ENCODE measurements at regions of chr2 and their contacts with region 1.

Region 1: DNA sequence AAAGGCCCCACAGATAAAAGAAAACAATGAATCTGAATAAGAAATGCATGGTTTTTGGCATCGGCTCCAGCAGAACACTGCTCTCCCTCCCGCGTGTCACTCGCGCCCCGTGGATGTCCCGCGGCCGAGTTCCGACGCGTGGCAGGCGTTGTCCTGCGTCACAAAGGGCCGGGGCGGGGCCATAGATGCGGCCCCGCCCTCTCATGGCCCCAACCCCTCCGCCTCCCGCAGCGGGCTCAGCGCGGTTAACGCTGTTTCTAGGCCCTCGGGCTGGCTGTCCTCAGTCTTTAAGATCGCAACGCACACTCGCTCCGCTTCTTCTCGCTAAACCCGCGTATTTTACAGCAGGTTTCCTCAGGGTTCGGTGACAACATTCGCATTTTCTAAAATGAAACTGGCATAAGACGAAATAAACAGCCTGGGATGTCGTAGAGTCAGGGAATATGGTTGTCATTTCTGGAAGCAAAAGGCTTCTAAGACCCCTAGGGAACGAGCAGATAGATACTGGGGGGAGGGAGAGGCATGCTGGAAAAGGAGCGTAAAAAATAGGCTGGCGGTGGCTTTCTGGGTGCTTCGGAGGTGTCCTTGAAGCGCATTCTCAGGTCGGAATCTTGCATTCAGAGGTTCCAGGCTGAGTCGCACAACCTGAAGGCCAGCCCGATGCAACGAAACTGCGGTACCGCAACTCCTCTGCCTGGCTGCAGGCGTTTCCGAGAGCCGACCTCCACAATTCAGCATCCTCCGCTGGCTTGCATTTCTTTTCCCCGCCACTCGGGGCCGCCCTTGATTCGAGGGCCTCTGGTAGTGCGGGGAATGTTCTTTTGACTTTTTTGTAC is at the start of gene FKBP7:
- DNase-seq: peak; percentile 53 to 92
- H3K4me3 ChIP-seq: peak within 1 kb of the TSS; percentile 77 to 89
- H3K27ac ChIP-seq: peak within 1 kb of the TSS; percentile 78 to 94
- H3K4me1 ChIP-seq: peaks cover 0 to 23% of the 10 kb centered on the region in 2 donors
- H3K27me3 ChIP-seq: no peaks in the 10 kb centered on the region
- CTCF ChIP-seq: peak; percentile 34 to 56 (median 49)
- total RNA-seq, gene FKBP7: 7.7 TPM

Region 2: GRCh38 chr2:178072383-178073301 is 406.0 kb before region 1 on chr2 and contains the start of gene PDE11A:
- intact Hi-C with region 1: loop called (anchors 1 kb)
- DNase-seq: peak; percentile 47 to 92
- H3K4me3 ChIP-seq: peak within 1 kb of the TSS; percentile 32 to 66
- H3K27ac ChIP-seq: peak within 1 kb of the TSS; percentile 9 to 48
- H3K4me1 ChIP-seq: no peaks in the 10 kb centered on the region
- H3K27me3 ChIP-seq: no peaks in the 10 kb centered on the region
- CTCF ChIP-seq: no peak
- total RNA-seq, gene PDE11A: 0.75 TPM

Region 3: GRCh38 chr2:178193823-178194599 is 284.6 kb before region 1 on chr2 and contains the start of gene OSBPL6:
- intact Hi-C with region 1: loop called (anchors 5 kb)
- DNase-seq: peak; percentile 15 to 90
- H3K4me3 ChIP-seq: peak within 1 kb of the TSS; percentile 84 to 96
- H3K27ac ChIP-seq: peak within 1 kb of the TSS; percentile 88 to 90
- H3K4me1 ChIP-seq: peaks cover 0 to 7% of the 10 kb centered on the region in 2 donors
- H3K27me3 ChIP-seq: no peaks in the 10 kb centered on the region
- CTCF ChIP-seq: peak in 1 of 3 experiments; percentile 31
- total RNA-seq, gene OSBPL6: 1.4 TPM

Region 4: DNA sequence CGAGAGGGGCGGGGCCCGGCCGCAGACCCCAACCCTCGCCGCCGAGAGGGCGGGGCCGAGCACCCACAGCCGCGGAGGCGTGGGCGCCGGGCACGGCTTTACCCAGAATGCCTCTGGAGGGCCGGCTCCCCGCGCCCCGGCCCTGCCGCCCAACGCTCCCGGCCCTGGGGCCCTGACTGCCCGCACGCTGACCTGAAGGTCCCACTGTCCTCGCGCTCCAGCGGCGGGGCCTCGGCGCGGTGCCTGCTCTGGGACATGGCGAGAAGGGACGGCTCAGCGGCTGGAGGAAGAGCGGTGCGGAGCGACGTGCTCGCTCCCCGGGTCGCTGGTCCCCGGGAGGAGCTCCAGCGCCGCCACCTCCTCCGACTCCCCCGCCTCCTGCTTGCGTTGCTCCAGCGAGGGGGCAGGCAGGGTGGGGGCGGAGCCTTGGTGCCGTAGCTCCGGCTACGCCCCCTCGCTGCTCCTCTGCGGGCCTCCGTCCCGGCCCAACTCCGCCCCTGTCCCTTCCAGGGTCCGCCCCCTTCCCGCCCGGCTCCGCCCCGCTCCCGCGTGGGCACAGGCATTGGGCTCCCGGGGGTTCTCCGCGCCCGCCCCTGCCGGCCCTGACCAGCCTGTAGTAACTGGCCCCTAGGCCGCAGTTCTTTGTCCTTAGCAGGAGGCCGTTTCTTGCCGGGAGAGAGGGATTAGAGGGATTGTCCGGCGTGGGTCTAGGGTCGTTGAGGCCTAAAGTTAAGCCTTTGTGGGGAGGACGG is 27.7 kb before region 1 on chr2 and contains the starts of genes PJVK and PRKRA:
- intact Hi-C with region 1: loop called (anchors 1 kb)
- DNase-seq: peak; percentile 91 to 98
- H3K4me3 ChIP-seq: peak within 1 kb of the TSS; percentile 93 to 96
- H3K27ac ChIP-seq: peak within 1 kb of the TSS; percentile 98 to 99
- H3K4me1 ChIP-seq: peaks cover 7 to 20% of the 10 kb centered on the region in 2 donors
- H3K27me3 ChIP-seq: no peaks in the 10 kb centered on the region
- CTCF ChIP-seq: no peak
- total RNA-seq, gene PJVK: not detected
- total RNA-seq, gene PRKRA: 75.5 TPM